ENCODE measurements at regions of chr2 and their contacts with region 1.

Region 1: DNA sequence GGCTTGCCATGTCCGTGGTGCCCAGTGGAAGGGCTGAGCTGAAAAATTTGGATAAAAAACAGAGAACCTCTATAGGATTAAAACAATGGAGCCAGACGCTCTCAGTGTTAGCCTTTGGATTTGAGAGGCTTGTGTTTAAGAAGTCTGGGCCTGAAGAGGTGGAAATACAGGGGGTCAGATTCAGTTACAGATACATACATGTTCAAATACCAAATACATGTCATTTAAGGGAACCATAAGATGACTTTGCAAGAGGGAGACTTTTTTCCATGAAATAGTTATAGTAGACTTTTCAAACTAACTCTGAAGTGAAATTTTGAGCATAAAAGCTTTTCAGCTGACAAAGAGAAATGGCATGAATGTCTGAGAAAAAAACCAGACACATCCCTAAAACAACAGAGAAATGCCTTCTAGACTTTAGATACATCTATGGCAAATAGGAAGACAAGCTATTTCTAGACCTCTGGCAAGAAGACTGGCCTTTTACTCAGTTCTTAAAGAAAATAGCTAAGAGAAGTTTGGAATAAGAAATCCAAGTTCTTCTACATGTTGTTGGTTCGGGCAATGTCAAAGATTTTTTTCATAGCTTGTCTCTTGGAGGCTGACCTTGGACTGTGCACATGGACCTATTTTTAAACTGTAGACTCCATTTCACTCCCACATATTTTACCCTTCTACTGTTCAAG is 112.9 kb downstream of the LTBP1 start:
- DNase-seq: no peak
- ATAC-seq: peak; percentile 74
- H3K4me3 ChIP-seq: peak overlapping the region; percentile 78 to 89
- H3K27ac ChIP-seq: peak overlapping the region; percentile 90 to 99
- H3K4me1 ChIP-seq: peaks cover 0 to 5% of the 10 kb centered on the region in 2 donors
- H3K27me3 ChIP-seq: no peaks in the 10 kb centered on the region

Region 2: GRCh38 chr2:32792416-32792815 is 267.2 kb before region 1 on chr2:
- intact Hi-C with region 1: no loop called
- DNase-seq: no peak
- ATAC-seq: no peak
- H3K4me3 ChIP-seq: no peak overlapping the region
- H3K27ac ChIP-seq: no peak overlapping the region
- H3K4me1 ChIP-seq: no peaks in the 10 kb centered on the region
- H3K27me3 ChIP-seq: no peaks in the 10 kb centered on the region

Region 3: GRCh38 chr2:33022989-33023727 is 36.5 kb before region 1 on chr2:
- intact Hi-C with region 1: no loop called
- DNase-seq: no peak
- ATAC-seq: no peak
- H3K4me3 ChIP-seq: no peak overlapping the region
- H3K27ac ChIP-seq: no peak overlapping the region
- H3K4me1 ChIP-seq: peaks cover 0 to 1% of the 10 kb centered on the region in 2 donors
- H3K27me3 ChIP-seq: no peaks in the 10 kb centered on the region

Region 4: GRCh38 chr2:33126958-33127357 is 67.3 kb after region 1 on chr2:
- intact Hi-C with region 1: loop called in 1 of 2 experiments (anchors 5 kb)
- DNase-seq: no peak
- ATAC-seq: peak; percentile 43
- H3K4me3 ChIP-seq: no peak overlapping the region
- H3K27ac ChIP-seq: peak overlapping the region; percentile 79 to 82
- H3K4me1 ChIP-seq: peaks cover 10 to 11% of the 10 kb centered on the region in 2 donors
- H3K27me3 ChIP-seq: no peaks in the 10 kb centered on the region

Region 5: DNA sequence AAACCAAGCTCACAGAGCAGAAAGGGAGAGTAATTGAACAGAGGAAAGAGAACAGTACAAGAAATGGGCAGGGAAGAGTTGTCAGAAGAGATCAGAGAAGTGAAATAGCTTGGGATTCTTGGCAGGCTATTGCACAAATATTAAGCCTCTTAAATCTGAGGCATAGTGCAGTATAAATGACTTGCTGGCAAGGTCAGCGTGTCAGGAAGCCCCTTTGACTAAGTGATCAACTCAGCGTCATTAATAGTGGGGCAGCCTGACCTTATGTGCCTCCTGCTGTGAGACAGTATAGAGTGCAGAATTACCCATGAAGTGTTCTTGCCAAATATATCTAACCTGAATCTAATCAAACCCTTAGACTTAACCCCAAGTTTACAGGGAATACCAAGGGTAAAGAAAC is 132.4 kb after region 1 on chr2:
- intact Hi-C with region 1: no loop called
- DNase-seq: no peak
- ATAC-seq: no peak
- H3K4me3 ChIP-seq: no peak overlapping the region
- H3K27ac ChIP-seq: peak overlapping the region; percentile 30 to 67
- H3K4me1 ChIP-seq: peaks cover 5 to 8% of the 10 kb centered on the region in 2 donors
- H3K27me3 ChIP-seq: no peaks in the 10 kb centered on the region

Measured in aorta (tissue), 5 donors.